ENCODE measurements at regions of chr7 and their contacts with region 1.

Region 1: GRCh38 chr7:116468534-116468933 is 31.0 kb upstream of the CAV2 start:
- DNase-seq: peak; percentile 96
- H3K4me3 ChIP-seq: no peak overlapping the region
- H3K27ac ChIP-seq: peak overlapping the region; percentile 99
- H3K4me1 ChIP-seq: peaks cover 83% of the 10 kb centered on the region
- H3K27me3 ChIP-seq: no peaks in the 10 kb centered on the region
- CTCF ChIP-seq: no peak

Region 2: GRCh38 chr7:115965796-115966475 is 502.6 kb before region 1 on chr7:
- CTCF ChIA-PET with region 1: no interaction called
- POLR2A ChIA-PET with region 1: no interaction called
- intact Hi-C with region 1: no loop called
- DNase-seq: no peak
- H3K4me3 ChIP-seq: no peak overlapping the region
- H3K27ac ChIP-seq: no peak overlapping the region
- H3K4me1 ChIP-seq: no peaks in the 10 kb centered on the region
- H3K27me3 ChIP-seq: no peaks in the 10 kb centered on the region
- CTCF ChIP-seq: no peak

Region 3: DNA sequence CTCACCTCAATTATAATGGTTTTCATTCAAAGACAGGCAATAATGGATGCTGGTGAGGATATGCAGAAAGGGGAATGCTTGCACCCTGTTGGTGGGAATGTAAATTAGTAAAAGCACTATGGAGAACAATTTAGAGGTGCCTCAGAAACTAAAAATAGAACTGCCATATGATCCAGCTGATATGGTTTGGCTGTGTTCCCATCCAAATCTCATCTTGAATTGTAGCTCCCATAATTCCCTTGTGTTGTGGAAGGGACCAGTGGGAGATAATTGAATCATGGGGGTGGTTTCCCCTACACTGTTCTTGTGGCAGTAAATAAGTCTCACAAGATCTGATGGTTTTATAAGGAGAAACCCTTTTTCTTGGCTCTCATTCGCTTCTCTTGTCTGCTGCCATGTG is 170.5 kb before region 1 on chr7:
- CTCF ChIA-PET with region 1: no interaction called
- POLR2A ChIA-PET with region 1: no interaction called
- intact Hi-C with region 1: no loop called
- DNase-seq: no peak
- H3K4me3 ChIP-seq: no peak overlapping the region
- H3K27ac ChIP-seq: no peak overlapping the region
- H3K4me1 ChIP-seq: peaks cover 14% of the 10 kb centered on the region
- H3K27me3 ChIP-seq: no peaks in the 10 kb centered on the region
- CTCF ChIP-seq: no peak

Region 4: GRCh38 chr7:116499168-116500077 is 30.9 kb after region 1 on chr7 and contains the start of gene CAV2:
- CTCF ChIA-PET with region 1: interaction called, 3 read pairs
- POLR2A ChIA-PET with region 1: interaction called, 3 read pairs
- intact Hi-C with region 1: loop called (anchors 2 kb)
- DNase-seq: peak; percentile 93
- H3K4me3 ChIP-seq: peak within 1 kb of the TSS; percentile 65
- H3K27ac ChIP-seq: peak within 1 kb of the TSS; percentile 98
- H3K4me1 ChIP-seq: peaks cover 26% of the 10 kb centered on the region
- H3K27me3 ChIP-seq: no peaks in the 10 kb centered on the region
- CTCF ChIP-seq: no peak
- total RNA-seq, gene CAV2: 265 and 286 TPM in 2 replicates

Measured in A673 (cell line).